ENCODE measurements at regions of chr9 and their contacts with region 1.

Region 1: GRCh38 chr9:5437254-5438216 is at the start of gene PLGRKT:
- DNase-seq: peak; percentile 94
- ATAC-seq: peak; percentile 87
- H3K4me3 ChIP-seq: peak within 1 kb of the TSS; percentile 60 to 96 (median 76)
- H3K4me3 Mint-ChIP-seq: peak within 1 kb of the TSS; percentile 95
- H3K27ac ChIP-seq: peak within 1 kb of the TSS; percentile 85 to 94
- H3K27ac Mint-ChIP-seq: peak within 1 kb of the TSS; percentile 98
- H3K4me1 ChIP-seq: peaks cover 22 to 23% of the 10 kb centered on the region in 2 donors
- H3K4me1 Mint-ChIP-seq: peaks cover 45% of the 10 kb centered on the region
- H3K27me3 ChIP-seq: no peaks in the 10 kb centered on the region
- H3K27me3 Mint-ChIP-seq: no peaks in the 10 kb centered on the region
- CTCF ChIP-seq: peak; percentile 17
- total RNA-seq, gene PLGRKT: 11.0 and 12.3 TPM in 2 replicates

Region 2: DNA sequence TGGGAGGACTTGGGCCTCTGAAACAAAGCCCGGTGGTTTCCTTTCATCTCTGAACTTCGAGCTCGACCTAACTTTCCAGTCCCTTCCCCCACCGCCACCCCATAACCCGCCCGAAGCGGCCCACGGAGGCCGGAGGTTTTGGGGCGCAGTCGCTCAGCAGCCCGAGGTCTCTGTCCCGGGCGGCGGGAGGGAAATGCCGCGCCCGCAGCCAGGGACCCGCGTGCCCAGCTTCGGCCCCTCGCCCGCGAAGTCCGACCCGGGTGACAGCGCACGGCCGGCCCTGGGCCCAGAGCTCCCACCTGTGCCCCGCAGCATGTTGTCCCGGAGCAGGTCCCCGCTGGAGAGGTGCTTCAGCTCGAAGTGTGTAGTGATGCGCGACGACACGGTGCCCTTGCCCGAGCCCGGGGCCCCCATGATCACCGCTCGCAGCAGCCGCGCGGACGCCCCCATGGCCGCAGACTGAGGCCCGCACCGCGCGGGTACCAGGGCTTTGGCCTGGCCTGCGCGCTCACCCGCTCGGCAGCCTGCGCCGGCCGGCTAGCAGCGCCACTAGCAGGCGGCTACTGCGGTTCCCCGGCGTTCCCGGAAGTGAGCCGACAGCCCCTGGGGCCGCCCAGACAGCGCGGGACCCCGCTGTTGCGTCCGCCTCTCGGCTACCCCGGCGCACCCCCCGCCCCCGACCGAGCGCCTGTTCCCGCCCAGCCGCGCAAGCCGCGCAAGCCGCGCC is 696.7 kb before region 1 on chr9 and contains the start of gene AK3:
- CTCF ChIA-PET with region 1: no interaction called
- POLR2A ChIA-PET with region 1: no interaction called
- intact Hi-C with region 1: loop called (anchors 1 kb)
- DNase-seq: peak; percentile 92
- ATAC-seq: peak; percentile 92
- H3K4me3 ChIP-seq: peak within 1 kb of the TSS; percentile 73 to 90 (median 85)
- H3K4me3 Mint-ChIP-seq: peak within 1 kb of the TSS; percentile 89
- H3K27ac ChIP-seq: peak within 1 kb of the TSS; percentile 51 to 83
- H3K27ac Mint-ChIP-seq: peak within 1 kb of the TSS; percentile 90
- H3K4me1 ChIP-seq: peaks cover 19 to 23% of the 10 kb centered on the region in 2 donors
- H3K4me1 Mint-ChIP-seq: peaks cover 27% of the 10 kb centered on the region
- H3K27me3 ChIP-seq: no peaks in the 10 kb centered on the region
- H3K27me3 Mint-ChIP-seq: no peaks in the 10 kb centered on the region
- CTCF ChIP-seq: no peak
- total RNA-seq, gene AK3: 20.4 and 22.9 TPM in 2 replicates

Region 3: DNA sequence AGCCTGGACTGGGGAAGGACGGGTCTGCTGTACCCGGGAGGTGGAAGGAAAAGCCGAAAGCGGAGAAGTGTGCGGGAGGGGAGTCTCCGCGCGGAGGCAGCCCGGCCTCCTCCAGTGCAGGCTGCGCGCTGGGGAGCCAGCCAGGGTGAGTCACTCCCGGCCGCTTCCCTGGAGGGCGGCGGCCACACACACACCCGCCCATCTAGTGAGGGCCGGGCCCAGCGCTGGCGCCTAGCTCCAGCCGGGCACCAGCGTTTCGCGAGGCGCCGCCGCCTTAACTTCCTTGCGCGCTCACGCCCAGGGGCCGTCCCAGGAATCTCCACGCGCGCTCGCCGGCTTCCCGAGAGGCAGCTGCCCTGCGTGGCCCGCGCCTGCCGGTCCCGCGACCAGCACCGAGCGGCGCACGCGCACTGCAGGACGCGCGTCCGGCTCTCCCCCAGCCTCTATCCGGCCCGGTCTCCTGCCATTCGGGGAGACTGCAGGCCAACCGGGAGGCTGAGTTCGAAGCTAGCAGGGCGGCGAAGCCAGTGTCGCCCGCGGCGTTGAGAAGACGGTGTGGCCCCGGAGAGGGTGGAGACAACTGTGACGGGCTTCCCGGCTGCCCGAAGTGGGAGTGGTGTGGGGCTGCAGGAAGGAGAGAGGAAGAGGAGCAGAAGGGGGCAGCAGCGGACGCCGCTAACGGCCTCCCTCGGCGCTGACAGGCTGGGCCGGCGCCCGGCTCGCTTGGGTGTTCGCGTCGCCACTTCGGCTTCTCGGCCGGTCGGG is 452.7 kb before region 1 on chr9 and contains the start of gene JAK2:
- CTCF ChIA-PET with region 1: no interaction called
- POLR2A ChIA-PET with region 1: no interaction called
- intact Hi-C with region 1: loop called (anchors 2 kb)
- DNase-seq: peak; percentile 89
- ATAC-seq: peak; percentile 76
- H3K4me3 ChIP-seq: peak within 1 kb of the TSS; percentile 67 to 88 (median 80)
- H3K4me3 Mint-ChIP-seq: peak within 1 kb of the TSS; percentile 94
- H3K27ac ChIP-seq: peak within 1 kb of the TSS; percentile 67 to 80
- H3K27ac Mint-ChIP-seq: peak within 1 kb of the TSS; percentile 97
- H3K4me1 ChIP-seq: peaks cover 32 to 34% of the 10 kb centered on the region in 2 donors
- H3K4me1 Mint-ChIP-seq: peaks cover 38% of the 10 kb centered on the region
- H3K27me3 ChIP-seq: no peaks in the 10 kb centered on the region
- H3K27me3 Mint-ChIP-seq: no peaks in the 10 kb centered on the region
- CTCF ChIP-seq: peak; percentile 25
- total RNA-seq, gene JAK2: 24.6 and 26.4 TPM in 2 replicates

Region 4: GRCh38 chr9:5336688-5337087 is 100.8 kb before region 1 on chr9:
- CTCF ChIA-PET with region 1: no interaction called
- POLR2A ChIA-PET with region 1: no interaction called
- intact Hi-C with region 1: loop called (anchors 10 kb)
- DNase-seq: peak; percentile 16
- ATAC-seq: no peak
- H3K4me3 ChIP-seq: no peak overlapping the region
- H3K4me3 Mint-ChIP-seq: no peak overlapping the region
- H3K27ac ChIP-seq: no peak overlapping the region
- H3K27ac Mint-ChIP-seq: no peak overlapping the region
- H3K4me1 ChIP-seq: peaks cover 7 to 9% of the 10 kb centered on the region in 2 donors
- H3K4me1 Mint-ChIP-seq: peaks cover 6% of the 10 kb centered on the region
- H3K27me3 ChIP-seq: no peaks in the 10 kb centered on the region
- H3K27me3 Mint-ChIP-seq: no peaks in the 10 kb centered on the region
- CTCF ChIP-seq: no peak

Region 5: GRCh38 chr9:5582835-5583195 is 145.3 kb after region 1 on chr9:
- CTCF ChIA-PET with region 1: interaction called, 17 read pairs
- POLR2A ChIA-PET with region 1: no interaction called
- intact Hi-C with region 1: loop called (anchors 1 kb)
- DNase-seq: peak; percentile 85
- ATAC-seq: peak; percentile 76
- H3K4me3 ChIP-seq: no peak overlapping the region
- H3K4me3 Mint-ChIP-seq: peak overlapping the region; percentile 67
- H3K27ac ChIP-seq: peak overlapping the region; percentile 53 to 75
- H3K27ac Mint-ChIP-seq: peak overlapping the region; percentile 92
- H3K4me1 ChIP-seq: peaks cover 25% of the 10 kb centered on the region in 2 donors
- H3K4me1 Mint-ChIP-seq: peaks cover 60% of the 10 kb centered on the region
- H3K27me3 ChIP-seq: no peaks in the 10 kb centered on the region
- H3K27me3 Mint-ChIP-seq: no peaks in the 10 kb centered on the region
- CTCF ChIP-seq: no peak

Region 6: DNA sequence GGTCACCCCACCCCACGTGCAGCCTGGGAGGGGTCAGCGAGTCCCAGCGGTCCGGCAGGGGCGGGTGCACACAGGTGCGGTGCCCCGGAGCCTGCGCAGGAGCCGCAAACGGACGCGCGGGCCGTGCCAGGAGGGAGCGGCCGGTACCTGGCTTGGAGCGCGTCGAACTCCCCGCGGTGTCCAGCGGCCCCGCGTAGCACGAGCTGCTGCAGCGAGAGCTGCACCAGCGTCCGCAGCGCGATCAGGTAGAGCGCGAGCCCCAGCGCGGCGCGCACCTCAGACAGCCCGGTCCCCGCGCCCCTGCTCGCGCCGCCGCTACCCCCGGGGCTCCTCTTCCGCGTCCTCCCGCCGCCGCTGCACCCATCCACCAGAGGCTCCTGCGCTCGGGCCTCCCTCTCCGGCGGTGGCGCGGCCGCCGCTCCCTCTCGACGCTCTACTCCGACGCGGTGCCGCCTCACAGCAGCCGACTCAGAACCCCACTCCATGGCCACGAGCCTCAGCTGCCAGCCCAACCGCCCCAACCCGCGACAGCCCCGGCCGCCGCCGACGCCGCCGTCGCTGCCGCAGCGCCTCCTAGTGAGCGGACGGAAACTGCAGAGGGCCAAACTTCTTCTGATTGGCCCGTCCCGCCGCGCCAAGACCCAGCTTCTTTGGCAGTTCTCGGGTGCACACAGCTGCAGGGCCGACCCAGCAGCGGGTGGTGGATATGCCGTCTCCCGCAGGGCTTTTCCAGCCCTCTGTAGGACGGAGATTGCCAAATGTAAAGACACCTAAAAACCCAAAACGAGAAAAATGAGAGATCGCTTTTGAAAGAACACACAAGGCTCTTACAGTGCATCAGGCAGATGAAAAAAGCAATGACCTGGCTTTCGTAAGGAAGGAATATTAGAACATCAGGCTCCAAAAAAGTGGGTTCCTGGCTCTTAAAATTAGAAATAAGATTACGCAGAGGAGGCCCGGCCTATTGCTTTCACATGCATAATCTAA is 395.3 kb after region 1 on chr9 and contains the start of gene ERMP1:
- CTCF ChIA-PET with region 1: interaction called, 3 read pairs
- POLR2A ChIA-PET with region 1: interaction called, 4 read pairs
- intact Hi-C with region 1: loop called (anchors 5 kb)
- DNase-seq: peak; percentile 93
- ATAC-seq: peak; percentile 89
- H3K4me3 ChIP-seq: peak within 1 kb of the TSS; percentile 63 to 83 (median 75)
- H3K4me3 Mint-ChIP-seq: peak within 1 kb of the TSS; percentile 95
- H3K27ac ChIP-seq: peak within 1 kb of the TSS in 1 of 2 donors; percentile 50
- H3K27ac Mint-ChIP-seq: peak within 1 kb of the TSS; percentile 93
- H3K4me1 ChIP-seq: peaks cover 19 to 25% of the 10 kb centered on the region in 2 donors
- H3K4me1 Mint-ChIP-seq: peaks cover 37% of the 10 kb centered on the region
- H3K27me3 ChIP-seq: no peaks in the 10 kb centered on the region
- H3K27me3 Mint-ChIP-seq: no peaks in the 10 kb centered on the region
- CTCF ChIP-seq: peak; percentile 96
- total RNA-seq, gene ERMP1: 10.6 and 12.8 TPM in 2 replicates